Mammary epithelial cell (primary cell): ENCODE measurements at regions of chr15 and their contacts with region 1.

Region 1: GRCh38 chr15:74768771-74769342 is 13.0 kb upstream of the CSK start:
- DNase-seq: no peak
- H3K4me3 ChIP-seq: no peak overlapping the region
- H3K27ac ChIP-seq: no peak overlapping the region
- H3K4me1 ChIP-seq: peaks cover 4% of the 10 kb centered on the region
- H3K27me3 ChIP-seq: no peaks in the 10 kb centered on the region
- CTCF ChIP-seq: peak; percentile 76 to 82

Region 2: DNA sequence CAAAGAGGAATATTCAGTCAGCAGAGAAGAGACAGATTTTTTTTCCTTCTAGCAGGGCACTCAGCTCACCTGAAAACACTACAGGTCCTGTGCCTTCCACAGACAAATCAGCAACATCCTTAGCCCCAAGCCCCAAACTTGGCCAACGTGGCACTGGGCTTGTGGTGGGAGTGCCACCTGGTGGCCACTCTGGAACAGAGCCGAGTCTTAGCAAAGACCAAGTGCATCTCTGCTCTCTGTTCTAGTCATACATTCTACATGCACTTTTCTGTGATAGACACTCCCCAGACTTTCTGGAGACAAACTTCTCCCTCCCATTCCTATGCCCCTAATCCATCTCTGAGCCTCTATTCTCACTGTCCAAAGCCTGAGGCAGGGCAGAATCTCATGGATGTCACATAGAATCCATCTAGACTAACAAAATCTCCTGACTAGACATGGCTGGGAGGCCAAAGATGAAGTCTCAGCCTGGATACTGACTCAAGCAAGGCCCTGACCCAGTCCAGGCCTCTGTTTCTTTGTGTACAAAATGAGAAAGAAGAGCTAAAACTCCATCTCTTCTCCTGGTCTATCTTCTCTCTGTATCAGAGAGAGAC is 330.0 kb before region 1 on chr15:
- CTCF ChIA-PET with region 1: no interaction called
- dilution Hi-C with region 1: no loop called
- in situ Hi-C with region 1: no loop called
- intact Hi-C with region 1: loop called (anchors 1 kb)
- DNase-seq: peak; percentile 73
- H3K4me3 ChIP-seq: no peak overlapping the region
- H3K27ac ChIP-seq: no peak overlapping the region
- H3K4me1 ChIP-seq: peaks cover 4% of the 10 kb centered on the region
- H3K27me3 ChIP-seq: no peaks in the 10 kb centered on the region
- CTCF ChIP-seq: peak; percentile 97 to 98

Region 3: DNA sequence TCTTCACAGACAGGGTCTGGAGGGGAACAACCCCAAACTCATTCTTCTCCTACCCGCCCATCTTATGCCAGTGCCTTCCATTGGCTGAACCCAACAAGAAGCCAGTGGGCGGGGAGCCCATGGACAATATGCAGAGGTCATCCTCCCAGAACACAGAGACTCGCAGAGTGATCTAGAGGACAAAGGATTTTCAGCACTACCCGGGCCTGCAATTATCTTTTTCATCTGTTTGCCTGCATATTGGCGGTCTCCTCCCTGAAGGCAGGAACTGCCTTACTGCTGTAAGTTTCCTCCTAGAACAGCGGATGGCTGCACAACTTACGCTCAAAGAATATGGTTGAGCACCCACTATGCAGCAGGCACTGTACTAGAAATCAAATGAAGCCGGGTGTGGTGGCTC is 29.0 kb before region 1 on chr15:
- CTCF ChIA-PET with region 1: no interaction called
- dilution Hi-C with region 1: loop called (anchors 5 kb)
- in situ Hi-C with region 1: no loop called
- intact Hi-C with region 1: no loop called
- DNase-seq: no peak
- H3K4me3 ChIP-seq: no peak overlapping the region
- H3K27ac ChIP-seq: no peak overlapping the region
- H3K4me1 ChIP-seq: no peaks in the 10 kb centered on the region
- H3K27me3 ChIP-seq: no peaks in the 10 kb centered on the region
- CTCF ChIP-seq: no peak

Region 4: DNA sequence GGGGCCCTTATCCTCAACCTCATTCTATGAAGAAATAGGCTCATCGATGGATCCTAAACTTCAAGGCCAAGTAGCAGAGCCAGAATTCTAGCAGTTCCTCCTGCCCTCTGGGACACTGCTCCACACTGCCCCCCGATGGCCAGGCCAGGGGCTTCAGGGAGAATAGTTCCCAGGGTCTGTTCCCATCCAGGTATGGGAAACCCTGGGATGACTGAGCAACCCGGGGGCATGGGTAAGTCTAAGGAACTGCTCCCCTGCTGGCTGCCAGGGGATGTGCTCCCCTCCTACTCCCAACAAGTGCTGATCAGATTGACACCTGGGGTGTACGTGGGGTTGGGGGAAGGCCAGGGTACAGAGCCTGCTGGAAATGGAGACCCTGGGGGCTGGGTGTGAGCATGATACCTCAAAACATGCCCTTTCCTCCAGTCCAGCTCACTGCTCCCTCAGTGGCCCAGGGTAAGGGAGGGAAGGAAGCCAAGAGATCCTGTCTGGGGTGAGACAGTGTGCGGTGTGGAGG is 66.5 kb after region 1 on chr15:
- CTCF ChIA-PET with region 1: interaction called, 5 read pairs
- dilution Hi-C with region 1: no loop called
- in situ Hi-C with region 1: no loop called
- intact Hi-C with region 1: loop called (anchors 1 kb)
- DNase-seq: peak; percentile 70
- H3K4me3 ChIP-seq: no peak overlapping the region
- H3K27ac ChIP-seq: no peak overlapping the region
- H3K4me1 ChIP-seq: no peaks in the 10 kb centered on the region
- H3K27me3 ChIP-seq: no peaks in the 10 kb centered on the region
- CTCF ChIP-seq: peak; percentile 84 to 98

Region 5: DNA sequence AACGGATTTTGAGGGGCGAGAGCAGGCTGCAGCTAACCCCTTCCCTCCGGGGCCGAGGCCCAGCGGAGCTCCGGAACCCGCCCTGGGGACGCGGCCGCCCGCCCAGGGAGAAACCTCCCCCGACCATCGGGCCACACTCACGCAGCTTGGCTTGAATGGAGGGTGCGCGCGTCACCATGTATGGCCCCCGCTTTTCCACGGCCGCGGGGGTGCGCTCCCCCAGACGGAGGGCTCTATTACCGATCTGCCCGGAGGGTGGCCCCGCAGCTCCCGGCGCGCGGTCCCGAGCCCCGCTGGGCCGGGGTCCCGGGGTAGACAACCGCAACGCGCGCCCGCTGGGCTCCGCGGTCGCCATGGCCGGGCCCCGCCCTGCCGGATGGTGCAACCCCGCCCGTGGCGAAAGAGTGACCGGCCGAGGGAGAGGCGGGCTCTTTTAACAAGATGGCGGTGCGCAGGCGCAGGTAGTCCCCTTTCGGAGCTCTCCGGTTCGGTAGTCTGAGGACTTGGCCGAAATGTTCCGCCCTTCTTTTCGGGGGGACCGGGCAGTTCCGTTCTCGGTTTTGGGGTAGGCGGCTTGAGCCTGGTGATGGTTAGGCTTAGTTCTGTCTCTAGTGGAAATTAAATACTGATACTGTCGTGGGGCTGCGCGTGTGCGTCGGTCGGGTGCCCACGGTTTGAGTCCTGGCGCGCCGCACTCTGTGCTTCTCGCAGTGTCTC is 137.7 kb after region 1 on chr15 and contains the start of gene FAM219B:
- CTCF ChIA-PET with region 1: no interaction called
- dilution Hi-C with region 1: no loop called
- in situ Hi-C with region 1: no loop called
- intact Hi-C with region 1: loop called (anchors 1 kb)
- DNase-seq: peak; percentile 76
- H3K4me3 ChIP-seq: peak within 1 kb of the TSS; percentile 81 to 97 (median 84)
- H3K27ac ChIP-seq: peak within 1 kb of the TSS; percentile 74
- H3K4me1 ChIP-seq: peaks cover 11% of the 10 kb centered on the region
- H3K27me3 ChIP-seq: no peaks in the 10 kb centered on the region
- CTCF ChIP-seq: peak in 1 of 2 donors; percentile 0
- total RNA-seq, gene FAM219B: 64.2 to 89.0 TPM

Region 6: DNA sequence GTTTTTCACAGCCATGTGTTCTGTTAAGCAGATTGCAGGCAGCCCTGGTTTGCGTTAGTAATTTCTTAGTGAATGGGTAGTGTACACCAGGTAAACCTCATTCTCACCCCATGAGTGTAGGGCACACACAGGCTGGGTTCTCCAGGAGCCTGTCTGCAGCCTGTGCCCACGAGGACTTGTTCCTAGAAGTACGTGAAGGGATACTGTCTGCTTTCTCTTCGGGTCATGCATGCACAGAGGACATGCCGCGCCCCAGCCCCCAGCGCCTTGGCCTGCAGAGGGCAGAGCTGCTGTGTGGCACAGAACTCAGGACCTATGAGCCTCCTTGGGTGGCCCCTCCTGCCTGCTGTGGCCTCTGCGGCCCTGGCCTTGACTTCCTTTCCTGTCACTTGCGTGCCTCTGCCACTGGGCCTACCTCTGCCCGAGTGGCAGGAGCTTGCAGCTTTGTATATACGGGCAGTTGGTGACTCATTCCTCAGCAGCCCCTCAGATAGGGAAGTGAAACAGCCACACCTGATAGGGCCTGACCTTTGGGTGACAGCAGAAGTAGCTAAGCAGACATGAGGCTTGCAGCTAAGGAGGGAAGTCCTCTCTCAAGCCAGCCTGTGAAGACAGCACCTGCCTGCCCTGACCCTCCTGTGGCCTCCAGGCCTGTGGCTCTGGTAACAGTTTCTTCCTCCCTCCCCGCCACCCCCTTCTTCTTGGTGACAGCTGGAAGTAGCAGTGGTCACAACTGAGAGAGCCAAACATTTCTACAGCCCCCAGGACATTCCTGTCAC is 274.1 kb after region 1 on chr15:
- CTCF ChIA-PET with region 1: no interaction called
- dilution Hi-C with region 1: no loop called
- in situ Hi-C with region 1: no loop called
- intact Hi-C with region 1: no loop called
- DNase-seq: peak; percentile 15
- H3K4me3 ChIP-seq: no peak overlapping the region
- H3K27ac ChIP-seq: no peak overlapping the region
- H3K4me1 ChIP-seq: peaks cover 27% of the 10 kb centered on the region
- H3K27me3 ChIP-seq: no peaks in the 10 kb centered on the region
- CTCF ChIP-seq: peak; percentile 17 to 48